Ovary (tissue), 10 donors: ENCODE measurements at regions of chr19 and their contacts with region 1.

Region 1: DNA sequence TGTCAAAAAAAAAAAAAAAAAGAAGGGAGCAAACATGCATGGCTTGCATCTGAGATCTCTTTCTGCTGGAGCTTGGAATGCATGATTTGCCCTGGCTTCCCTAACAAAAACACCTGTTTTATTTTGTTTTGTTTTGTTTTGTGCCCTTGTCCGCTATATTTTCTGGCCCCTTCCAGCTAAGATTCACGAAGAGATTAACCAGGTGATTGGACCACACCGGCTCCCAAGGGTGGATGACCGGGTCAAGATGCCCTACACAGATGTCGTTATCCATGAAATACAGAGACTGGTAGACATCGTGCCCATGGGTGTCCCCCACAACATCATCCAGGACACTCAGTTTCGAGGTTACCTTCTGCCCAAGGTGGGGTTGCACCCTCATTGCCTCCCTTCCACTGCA is 15.9 kb upstream of the CYP2A7 start:
- DNase-seq: no peak
- H3K4me3 ChIP-seq: no peak overlapping the region
- H3K27ac ChIP-seq: no peak overlapping the region
- H3K4me1 ChIP-seq: no peaks in the 10 kb centered on the region
- H3K27me3 ChIP-seq: no peaks in the 10 kb centered on the region
- CTCF ChIP-seq: no peak
- EP300 ChIP-seq: no peak
- POLR2A ChIP-seq: no peak

Region 2: GRCh38 chr19:39031368-39032062 is 1866.4 kb before region 1 on chr19:
- intact Hi-C with region 1: loop called in 1 of 4 experiments (anchors 10 kb)
- DNase-seq: peak; percentile 80 to 92 (median 88)
- H3K4me3 ChIP-seq: peak overlapping the region; percentile 46
- H3K27ac ChIP-seq: peak overlapping the region in 1 of 2 donors; percentile 52
- H3K4me1 ChIP-seq: peaks cover 2% of the 10 kb centered on the region
- H3K27me3 ChIP-seq: no peaks in the 10 kb centered on the region
- CTCF ChIP-seq: no peak
- EP300 ChIP-seq: no peak
- POLR2A ChIP-seq: no peak